K562 (cell line): ENCODE measurements at regions of chr4 and their contacts with region 1.

Region 1: GRCh38 chr4:24980064-24980690 is 50.6 kb downstream of the LGI2 start:
- DNase-seq: peak; percentile 59 to 70 (median 67)
- ATAC-seq: peak; percentile 91
- H3K4me3 ChIP-seq: no peak overlapping the region
- H3K27ac ChIP-seq: no peak overlapping the region
- H3K4me1 ChIP-seq: no peaks in the 10 kb centered on the region
- H3K27me3 ChIP-seq: peaks cover 0 to 20% of the 10 kb centered on the region in 2 experiments; a peak in 2 of 5 replicates
- CTCF ChIP-seq: peak; percentile 80 to 81 (median 80)
- EP300 ChIP-seq: no peak
- POLR2A ChIP-seq: no peak
- RAD21 ChIP-seq: peak; percentile 52 to 61

Region 2: GRCh38 chr4:24630937-24631336 is 349.2 kb before region 1 on chr4:
- CTCF ChIA-PET with region 1: no interaction called
- POLR2A ChIA-PET with region 1: no interaction called
- in situ Hi-C with region 1: no loop called
- intact Hi-C with region 1: no loop called
- DNase-seq: no peak
- ATAC-seq: no peak
- H3K4me3 ChIP-seq: no peak overlapping the region
- H3K27ac ChIP-seq: no peak overlapping the region
- H3K4me1 ChIP-seq: no peaks in the 10 kb centered on the region
- H3K27me3 ChIP-seq: peaks cover 0 to 8% of the 10 kb centered on the region in 2 experiments; a peak in 3 of 5 replicates
- CTCF ChIP-seq: no peak
- EP300 ChIP-seq: no peak
- POLR2A ChIP-seq: no peak
- RAD21 ChIP-seq: no peak

Region 3: GRCh38 chr4:24736066-24736465 is 244.1 kb before region 1 on chr4:
- CTCF ChIA-PET with region 1: no interaction called
- POLR2A ChIA-PET with region 1: no interaction called
- in situ Hi-C with region 1: no loop called
- intact Hi-C with region 1: loop called (anchors 5 kb)
- DNase-seq: peak in 1 of 4 experiments; percentile 35
- ATAC-seq: peak; percentile 78
- H3K4me3 ChIP-seq: no peak overlapping the region
- H3K27ac ChIP-seq: no peak overlapping the region
- H3K4me1 ChIP-seq: no peaks in the 10 kb centered on the region
- H3K27me3 ChIP-seq: no peaks in the 10 kb centered on the region
- CTCF ChIP-seq: peak; percentile 44 to 53 (median 48)
- EP300 ChIP-seq: no peak
- POLR2A ChIP-seq: no peak
- RAD21 ChIP-seq: peak in 1 of 2 experiments; percentile 38; a peak in 1 of 4 replicates

Region 4: GRCh38 chr4:25043548-25043947 is 63.4 kb after region 1 on chr4:
- CTCF ChIA-PET with region 1: no interaction called
- POLR2A ChIA-PET with region 1: no interaction called
- in situ Hi-C with region 1: no loop called
- intact Hi-C with region 1: loop called (anchors 1 kb)
- DNase-seq: no peak
- ATAC-seq: no peak
- H3K4me3 ChIP-seq: no peak overlapping the region
- H3K27ac ChIP-seq: no peak overlapping the region
- H3K4me1 ChIP-seq: no peaks in the 10 kb centered on the region
- H3K27me3 ChIP-seq: peaks cover 8 to 23% of the 10 kb centered on the region in 2 experiments; a peak in 4 of 5 replicates
- CTCF ChIP-seq: no peak
- EP300 ChIP-seq: no peak
- POLR2A ChIP-seq: no peak
- RAD21 ChIP-seq: no peak

Region 5: GRCh38 chr4:25060963-25061340 is 80.8 kb after region 1 on chr4:
- CTCF ChIA-PET with region 1: no interaction called
- POLR2A ChIA-PET with region 1: interaction called, 3 read pairs
- in situ Hi-C with region 1: no loop called
- intact Hi-C with region 1: loop called (anchors 1 kb)
- DNase-seq: peak in 3 of 4 experiments; percentile 27 to 53 (median 27)
- ATAC-seq: peak; percentile 88
- H3K4me3 ChIP-seq: no peak overlapping the region
- H3K27ac ChIP-seq: no peak overlapping the region
- H3K4me1 ChIP-seq: no peaks in the 10 kb centered on the region
- H3K27me3 ChIP-seq: peaks cover 0 to 5% of the 10 kb centered on the region in 2 experiments; a peak in 1 of 5 replicates
- CTCF ChIP-seq: peak; percentile 30 to 58 (median 51); a peak in 4 of 6 replicates
- EP300 ChIP-seq: no peak
- POLR2A ChIP-seq: no peak
- RAD21 ChIP-seq: peak in 1 of 2 experiments; percentile 31; a peak in 2 of 4 replicates

Region 6: GRCh38 chr4:25144870-25145481 is 164.8 kb after region 1 on chr4:
- CTCF ChIA-PET with region 1: no interaction called
- POLR2A ChIA-PET with region 1: no interaction called
- in situ Hi-C with region 1: no loop called
- intact Hi-C with region 1: loop called (anchors 10 kb)
- DNase-seq: peak; percentile 21 to 33 (median 26)
- ATAC-seq: peak; percentile 65; the same call in 2 of the 3 replicates
- H3K4me3 ChIP-seq: no peak overlapping the region
- H3K27ac ChIP-seq: no peak overlapping the region
- H3K4me1 ChIP-seq: no peaks in the 10 kb centered on the region
- H3K27me3 ChIP-seq: no peaks in the 10 kb centered on the region
- CTCF ChIP-seq: peak; percentile 23 to 60 (median 38); a peak in 3 of 6 replicates
- EP300 ChIP-seq: no peak
- POLR2A ChIP-seq: no peak
- RAD21 ChIP-seq: peak; percentile 29 to 55

Region 7: DNA sequence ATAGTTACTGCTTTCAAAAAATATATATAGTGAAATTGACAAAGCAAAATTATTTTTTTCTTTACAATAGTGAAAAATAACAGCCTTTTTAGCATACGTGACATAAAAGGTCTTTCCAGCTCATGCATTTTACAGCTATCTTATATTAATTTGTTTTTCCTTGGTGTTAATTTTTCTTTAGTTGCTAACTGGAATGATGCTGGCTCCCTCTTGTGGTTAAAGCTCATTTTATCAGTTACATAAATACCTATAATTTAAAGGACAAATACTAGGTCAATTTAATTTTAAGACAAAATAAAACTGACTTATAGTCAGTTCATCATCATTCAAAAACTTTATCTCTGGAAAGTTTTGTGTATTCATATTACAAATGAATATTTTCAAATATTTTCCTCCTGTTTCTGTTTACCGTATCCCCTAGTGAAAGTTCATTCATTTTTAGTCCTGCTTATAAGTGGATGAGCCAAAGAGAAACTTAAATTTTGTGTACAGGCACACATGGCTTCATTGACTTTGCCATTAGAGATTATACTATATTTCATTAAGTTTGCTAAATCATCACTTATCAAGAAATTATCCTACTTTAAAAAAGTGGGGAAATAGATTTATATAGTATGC is 386.9 kb after region 1 on chr4:
- CTCF ChIA-PET with region 1: no interaction called
- POLR2A ChIA-PET with region 1: no interaction called
- in situ Hi-C with region 1: loop called (anchors 10 kb)
- intact Hi-C with region 1: loop called (anchors 5 kb)
- DNase-seq: peak in 2 of 4 experiments; percentile 20 to 57
- ATAC-seq: no peak
- H3K4me3 ChIP-seq: no peak overlapping the region
- H3K27ac ChIP-seq: no peak overlapping the region
- H3K4me1 ChIP-seq: no peaks in the 10 kb centered on the region
- H3K27me3 ChIP-seq: no peaks in the 10 kb centered on the region
- CTCF ChIP-seq: peak in 2 of 3 experiments; percentile 41 to 75; a peak in 4 of 6 replicates
- EP300 ChIP-seq: no peak
- POLR2A ChIP-seq: no peak
- RAD21 ChIP-seq: peak; percentile 60 to 75

Region 8: DNA sequence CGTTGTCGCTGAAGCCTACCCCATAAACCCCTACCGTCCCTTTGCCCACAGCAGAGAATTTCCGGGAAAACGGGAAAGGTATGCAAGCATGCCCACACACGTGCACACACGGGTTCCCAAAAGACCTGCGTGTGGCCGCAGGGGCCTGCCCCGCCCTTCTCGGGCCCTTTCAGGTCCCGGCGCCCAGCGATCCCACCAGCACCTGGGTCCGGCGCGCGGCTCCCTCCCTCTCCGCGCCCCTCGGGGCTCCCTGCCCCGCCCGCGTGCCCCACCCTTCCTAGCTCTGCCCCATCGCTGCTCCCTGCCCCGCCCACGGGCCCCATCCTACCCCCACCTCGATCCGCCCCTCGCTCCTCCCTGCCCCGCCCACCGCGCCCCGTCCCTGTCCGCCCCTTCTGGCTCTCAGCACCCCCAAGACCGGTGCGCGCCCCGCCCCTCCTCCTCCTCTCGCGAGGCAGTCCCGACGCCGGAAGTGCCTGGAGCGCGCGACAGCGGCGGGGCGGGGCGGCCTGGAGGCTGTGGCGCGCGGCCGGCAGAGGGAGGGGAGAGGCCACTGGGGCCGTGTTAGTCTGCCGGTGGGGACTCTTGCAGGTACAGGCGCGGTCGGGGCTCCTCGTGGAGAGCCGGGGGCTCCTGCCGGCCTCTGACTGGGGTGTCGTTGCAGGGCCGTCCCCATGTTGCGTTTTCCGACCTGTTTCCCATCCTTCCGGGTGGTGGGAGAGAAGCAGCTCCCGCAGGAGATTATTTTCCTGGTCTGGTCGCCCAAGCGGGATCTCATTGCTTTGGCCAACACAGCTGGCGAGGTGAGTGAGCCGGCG is 396.8 kb after region 1 on chr4 and contains the start of gene ANAPC4:
- CTCF ChIA-PET with region 1: no interaction called
- POLR2A ChIA-PET with region 1: no interaction called
- in situ Hi-C with region 1: loop called (anchors 10 kb)
- intact Hi-C with region 1: no loop called
- DNase-seq: peak; percentile 97 to 99 (median 99)
- ATAC-seq: peak; percentile 95
- H3K4me3 ChIP-seq: peak within 1 kb of the TSS; percentile 69
- H3K27ac ChIP-seq: peak within 1 kb of the TSS; percentile 72
- H3K4me1 ChIP-seq: peaks cover 17% of the 10 kb centered on the region in 2 experiments; a peak in 4 of 5 replicates
- H3K27me3 ChIP-seq: no peaks in the 10 kb centered on the region
- CTCF ChIP-seq: no peak
- EP300 ChIP-seq: no peak
- POLR2A ChIP-seq: peak; percentile 91
- RAD21 ChIP-seq: no peak
- polyA plus RNA-seq, gene ANAPC4: 23.9 to 30.3 TPM

Region 9: GRCh38 chr4:25563071-25563564 is 582.9 kb after region 1 on chr4:
- CTCF ChIA-PET with region 1: no interaction called
- POLR2A ChIA-PET with region 1: no interaction called
- in situ Hi-C with region 1: no loop called
- intact Hi-C with region 1: no loop called
- DNase-seq: no peak
- ATAC-seq: no peak
- H3K4me3 ChIP-seq: no peak overlapping the region
- H3K27ac ChIP-seq: no peak overlapping the region
- H3K4me1 ChIP-seq: no peaks in the 10 kb centered on the region
- H3K27me3 ChIP-seq: peaks cover 8 to 30% of the 10 kb centered on the region in 2 experiments; a peak in 3 of 5 replicates
- CTCF ChIP-seq: no peak
- EP300 ChIP-seq: no peak
- POLR2A ChIP-seq: no peak
- RAD21 ChIP-seq: no peak